ENCODE measurements at regions of chr22 and their contacts with region 1.

Region 1: DNA sequence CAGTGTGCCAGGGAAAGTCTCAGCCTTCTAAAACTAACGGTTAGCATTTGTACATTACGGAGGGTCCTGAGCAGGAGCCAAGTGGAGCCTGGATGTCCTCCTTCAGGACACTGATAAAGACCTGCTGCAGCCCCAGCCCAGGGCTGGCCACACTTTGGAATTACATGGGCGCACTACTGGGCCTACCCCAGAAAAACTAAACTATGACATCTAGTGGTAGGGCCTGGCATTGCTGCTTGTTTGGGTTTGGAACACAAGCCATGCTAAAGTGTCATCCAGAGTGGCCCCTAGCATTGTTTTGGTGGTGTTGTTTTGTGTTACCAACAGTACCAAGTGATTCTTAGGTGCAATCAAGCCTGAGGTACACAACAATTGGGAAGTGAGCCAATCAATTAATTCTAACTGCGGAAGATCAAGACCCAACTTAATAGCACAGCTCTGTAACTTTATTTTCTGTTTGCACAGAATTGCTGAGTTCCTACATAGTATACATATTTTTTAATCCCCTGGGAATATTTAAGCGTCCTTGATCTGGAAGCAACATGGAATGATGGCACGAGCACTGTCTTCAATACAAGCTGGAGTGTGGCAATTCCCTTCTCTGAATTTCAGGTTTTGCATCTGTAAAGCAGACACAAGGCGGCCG is 340.7 kb downstream of the LARGE1 start:
- DNase-seq: peak; percentile 62 to 82 (median 75)
- H3K4me3 ChIP-seq: no peak overlapping the region
- H3K27ac ChIP-seq: no peak overlapping the region
- H3K4me1 ChIP-seq: peaks cover 7 to 8% of the 10 kb centered on the region in 2 donors
- H3K27me3 ChIP-seq: no peaks in the 10 kb centered on the region
- CTCF ChIP-seq: peak; percentile 83 to 92 (median 86)
- POLR2A ChIP-seq: no peak

Region 2: DNA sequence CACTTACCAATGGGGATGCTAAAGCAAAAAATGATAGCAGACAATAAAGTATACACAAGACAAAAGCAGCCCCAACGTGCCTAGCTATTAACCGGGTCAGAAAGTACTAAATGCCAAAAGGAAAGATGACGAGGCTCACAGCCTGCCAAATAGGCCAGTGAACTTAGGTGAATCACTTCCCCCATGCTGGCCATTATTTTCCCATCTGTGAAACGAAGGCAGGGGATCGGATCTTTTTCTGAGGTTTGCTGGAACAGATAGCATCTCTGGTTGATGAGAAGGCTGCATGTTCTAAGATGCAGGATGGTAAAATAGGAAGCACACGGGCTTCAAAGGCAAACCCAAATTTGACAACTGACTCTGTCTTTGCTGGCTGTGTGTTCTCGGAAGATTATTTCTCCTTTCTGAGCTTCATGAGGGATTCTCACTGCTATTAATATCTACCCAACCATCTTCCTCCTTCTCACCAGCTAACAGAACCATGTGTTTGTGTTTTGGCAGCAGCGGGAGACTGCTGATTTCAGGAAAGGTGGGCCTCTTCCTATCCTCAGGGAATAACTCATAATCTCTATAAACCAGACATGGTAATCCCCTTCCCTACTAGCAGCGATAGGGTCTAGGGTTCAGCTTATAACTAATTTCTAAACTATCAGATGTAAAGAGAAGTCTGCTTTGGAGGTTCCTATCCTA is 50.0 kb before region 1 on chr22:
- intact Hi-C with region 1: loop called (anchors 5 to 10 kb)
- DNase-seq: peak; percentile 46 to 81 (median 75)
- H3K4me3 ChIP-seq: no peak overlapping the region
- H3K27ac ChIP-seq: peak overlapping the region in 2 of 5 donors; percentile 13 to 43
- H3K4me1 ChIP-seq: peaks cover 10 to 12% of the 10 kb centered on the region in 2 donors
- H3K27me3 ChIP-seq: no peaks in the 10 kb centered on the region
- CTCF ChIP-seq: no peak
- POLR2A ChIP-seq: no peak

Measured in adrenal gland (tissue), 19 donors.